OCI-LY7 (cell line): ENCODE measurements at regions of chr3 and their contacts with region 1.

Region 1: DNA sequence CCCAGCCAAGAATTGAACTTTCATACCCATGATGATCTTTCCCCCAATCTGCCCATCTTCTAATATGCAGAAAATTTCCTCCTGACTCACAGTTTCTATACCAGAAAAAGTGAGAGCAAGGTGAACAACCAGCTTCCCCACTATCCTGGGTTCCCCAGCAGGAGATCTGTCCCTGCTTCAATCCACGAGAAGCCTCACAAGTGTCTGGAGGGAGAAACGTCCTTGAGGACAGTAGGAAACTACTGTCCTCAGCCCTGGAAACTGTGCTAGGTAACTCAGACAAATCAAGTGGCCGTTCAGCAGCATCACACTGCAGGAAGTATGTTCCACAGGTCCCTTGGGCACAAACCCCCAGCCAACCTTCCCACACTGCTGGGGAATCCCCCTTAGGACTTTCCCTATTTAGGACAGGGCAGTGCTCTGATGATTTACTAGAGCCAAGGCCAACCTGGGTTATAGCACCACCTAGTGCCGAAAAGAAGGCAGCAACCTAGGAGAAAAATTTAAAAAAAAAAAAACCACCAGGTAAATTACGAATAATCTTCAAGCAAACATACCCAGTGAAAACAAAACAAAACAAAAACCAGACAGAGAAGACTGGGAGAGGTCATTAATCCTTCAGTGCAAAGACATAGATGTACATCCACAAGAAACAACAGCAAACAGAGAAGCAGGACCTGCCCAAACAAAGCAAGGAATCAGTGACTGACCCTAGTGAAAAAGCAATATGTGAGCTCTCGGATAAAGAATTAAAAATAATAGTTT is 36.0 kb downstream of the MORC1 start:
- DNase-seq: peak; percentile 39
- H3K4me3 ChIP-seq: no peak overlapping the region
- H3K27ac ChIP-seq: no peak overlapping the region
- H3K4me1 ChIP-seq: no peaks in the 10 kb centered on the region
- CTCF ChIP-seq: peak; percentile 88

Region 2: GRCh38 chr3:109005443-109005842 is 76.5 kb before region 1 on chr3:
- CTCF ChIA-PET with region 1: no interaction called
- POLR2A ChIA-PET with region 1: no interaction called
- intact Hi-C with region 1: no loop called
- DNase-seq: no peak
- H3K4me3 ChIP-seq: no peak overlapping the region
- H3K27ac ChIP-seq: no peak overlapping the region
- H3K4me1 ChIP-seq: no peaks in the 10 kb centered on the region
- CTCF ChIP-seq: no peak

Region 3: GRCh38 chr3:109023656-109024254 is 58.2 kb before region 1 on chr3:
- CTCF ChIA-PET with region 1: no interaction called
- POLR2A ChIA-PET with region 1: no interaction called
- intact Hi-C with region 1: loop called (anchors 2 kb)
- DNase-seq: peak; percentile 47
- H3K4me3 ChIP-seq: no peak overlapping the region
- H3K27ac ChIP-seq: no peak overlapping the region
- H3K4me1 ChIP-seq: no peaks in the 10 kb centered on the region
- CTCF ChIP-seq: peak; percentile 94

Region 4: DNA sequence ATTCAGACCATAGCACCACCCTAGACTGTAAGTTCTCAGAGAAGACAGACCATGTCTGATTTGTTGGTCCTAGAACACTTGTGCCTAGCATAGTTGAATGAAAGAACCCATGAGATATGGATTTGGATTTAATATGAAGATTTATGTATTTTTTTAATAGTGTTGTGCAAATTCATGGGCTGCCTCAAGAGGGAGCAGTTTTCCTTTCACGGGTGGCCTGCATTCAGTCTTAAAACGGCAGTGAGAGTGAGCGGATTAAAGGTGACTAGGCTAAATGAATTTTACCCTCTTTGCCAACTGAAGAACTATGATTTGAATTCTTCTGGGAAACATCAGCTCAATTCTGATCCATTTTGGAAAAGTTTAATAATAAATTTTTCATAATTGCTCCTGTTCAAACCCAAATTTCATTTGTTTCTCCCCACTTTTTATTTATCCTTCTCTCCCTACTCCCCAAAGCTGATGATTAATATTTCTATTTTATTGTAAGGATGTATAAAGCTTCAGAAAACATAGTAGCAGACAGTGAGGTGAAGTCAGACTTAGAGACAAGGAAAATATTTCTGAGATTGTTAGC is 31.2 kb before region 1 on chr3:
- CTCF ChIA-PET with region 1: no interaction called
- POLR2A ChIA-PET with region 1: interaction called, 6 read pairs
- intact Hi-C with region 1: loop called (anchors 2 kb)
- DNase-seq: peak; percentile 38
- H3K4me3 ChIP-seq: no peak overlapping the region
- H3K27ac ChIP-seq: no peak overlapping the region
- H3K4me1 ChIP-seq: peaks cover 4% of the 10 kb centered on the region
- CTCF ChIP-seq: peak; percentile 84

Region 5: GRCh38 chr3:109553591-109554371 is 471.9 kb after region 1 on chr3:
- CTCF ChIA-PET with region 1: no interaction called
- POLR2A ChIA-PET with region 1: no interaction called
- intact Hi-C with region 1: no loop called
- DNase-seq: no peak
- H3K4me3 ChIP-seq: no peak overlapping the region
- H3K27ac ChIP-seq: no peak overlapping the region
- H3K4me1 ChIP-seq: no peaks in the 10 kb centered on the region
- CTCF ChIP-seq: no peak